Heart left ventricle (tissue), 16 donors: ENCODE measurements at regions of chr17 and their contacts with region 1.

Region 1: GRCh38 chr17:9138101-9138717 is 116.9 kb downstream of the NTN1 start:
- DNase-seq: peak; percentile 38 to 82 (median 75)
- ATAC-seq: peak; percentile 78 to 94 (median 92)
- H3K4me3 ChIP-seq: no peak overlapping the region
- H3K27ac ChIP-seq: peak overlapping the region in 4 of 12 donors; percentile 19 to 63 (median 26)
- H3K4me1 ChIP-seq: peaks cover 0 to 34% (median 0%) of the 10 kb centered on the region in 12 donors
- H3K27me3 ChIP-seq: no peaks in the 10 kb centered on the region
- CTCF ChIP-seq: no peak
- POLR2A ChIP-seq: no peak

Region 2: GRCh38 chr17:9079483-9080103 is 58.6 kb before region 1 on chr17:
- intact Hi-C with region 1: loop called in 1 of 10 experiments (anchors 10 kb)
- DNase-seq: no peak
- ATAC-seq: no peak
- H3K4me3 ChIP-seq: no peak overlapping the region
- H3K27ac ChIP-seq: no peak overlapping the region
- H3K4me1 ChIP-seq: peaks cover 0 to 10% (median 0%) of the 10 kb centered on the region in 12 donors
- H3K27me3 ChIP-seq: no peaks in the 10 kb centered on the region
- CTCF ChIP-seq: no peak
- POLR2A ChIP-seq: no peak

Region 3: DNA sequence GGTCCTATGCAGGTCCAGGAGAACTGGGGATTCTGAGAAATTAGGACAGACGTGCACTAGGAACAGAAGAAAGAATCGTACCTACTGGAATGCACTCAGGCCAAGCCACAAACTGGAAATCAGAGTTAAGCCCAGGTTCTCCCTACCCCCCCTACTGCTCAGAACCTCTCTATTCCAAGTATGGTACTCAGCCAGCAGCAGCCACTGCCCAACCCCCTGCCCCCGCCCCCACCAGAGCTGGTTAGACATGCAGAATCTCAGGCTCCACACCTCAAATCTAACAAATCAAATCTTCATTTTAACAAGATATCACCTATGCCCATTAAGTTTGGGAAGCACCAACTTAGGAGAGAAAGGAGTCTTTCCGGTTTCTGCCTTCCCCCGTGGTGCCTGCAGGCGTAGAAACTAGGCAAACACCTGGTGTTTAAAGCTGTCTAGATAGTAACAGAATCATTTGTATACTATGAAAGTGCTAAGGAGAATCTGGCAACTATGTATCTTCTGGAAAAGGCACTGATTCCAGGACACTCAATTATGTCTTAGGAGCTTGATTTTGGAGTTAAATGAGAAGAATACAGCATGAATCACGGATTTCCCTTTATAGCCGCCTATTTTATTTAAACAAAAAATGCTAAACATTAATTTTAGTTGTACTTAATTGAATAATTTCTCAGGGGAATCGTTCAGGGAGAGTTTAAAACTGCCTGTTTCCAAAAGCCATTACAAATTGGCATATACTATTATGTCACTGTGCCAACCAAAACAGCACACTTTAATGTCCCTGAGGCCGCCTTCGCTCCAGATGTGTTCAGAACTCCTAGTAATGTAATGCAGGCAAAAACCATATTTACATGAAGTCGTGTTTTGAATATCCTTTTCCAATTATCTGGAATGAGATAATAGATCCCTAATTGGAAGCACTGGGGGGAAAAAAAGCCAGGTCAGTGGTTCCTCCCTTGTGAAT is 270.9 kb after region 1 on chr17:
- intact Hi-C with region 1: no loop called
- DNase-seq: no peak
- ATAC-seq: peak in 1 of 4 donors; percentile 46
- H3K4me3 ChIP-seq: no peak overlapping the region
- H3K27ac ChIP-seq: no peak overlapping the region
- H3K4me1 ChIP-seq: peaks cover 0 to 12% (median 0%) of the 10 kb centered on the region in 12 donors
- H3K27me3 ChIP-seq: no peaks in the 10 kb centered on the region
- CTCF ChIP-seq: no peak
- POLR2A ChIP-seq: no peak